ENCODE measurements at regions of chr16 and their contacts with region 1.

Region 1: DNA sequence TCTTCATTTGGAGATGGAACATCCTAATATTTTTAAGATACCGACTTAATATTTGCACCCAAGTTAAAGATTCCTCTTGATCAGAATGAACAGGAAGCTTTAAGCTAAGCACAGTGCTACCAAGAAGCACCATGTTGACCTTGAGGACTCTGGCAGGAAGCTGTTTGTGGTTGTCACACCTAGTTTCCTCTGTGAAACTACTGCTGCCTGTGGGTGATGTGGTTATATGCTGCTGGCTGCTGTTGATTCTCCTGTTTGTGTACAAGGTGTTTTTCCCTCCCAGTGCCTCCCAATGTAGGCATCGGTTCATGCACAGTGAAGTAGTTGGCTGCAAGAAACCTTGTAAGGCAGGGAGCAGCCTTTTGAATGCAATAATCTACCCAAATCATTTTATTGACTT is 23.4 kb downstream of the RBL2 start:
- ATAC-seq: no peak
- H3K4me3 ChIP-seq: no peak overlapping the region
- H3K27ac ChIP-seq: no peak overlapping the region
- H3K4me1 ChIP-seq: no peaks in the 10 kb centered on the region

Region 2: GRCh38 chr16:53282975-53283946 is 174.4 kb before region 1 on chr16:
- in situ Hi-C with region 1: loop called in 1 of 9 experiments (anchors 25 kb)
- ATAC-seq: peak in 4 of 8 experiments; percentile 16 to 82 (median 62)
- H3K4me3 ChIP-seq: no peak overlapping the region
- H3K27ac ChIP-seq: no peak overlapping the region
- H3K4me1 ChIP-seq: no peaks in the 10 kb centered on the region

Measured in motor neuron (in vitro differentiated cells).